Heart right ventricle (tissue), 16 donors: ENCODE measurements at regions of chr12 and their contacts with region 1.

Region 1: GRCh38 chr12:68610370-68611093 is at the start of gene RAP1B:
- DNase-seq: peak; percentile 90 to 91
- ATAC-seq: peak; percentile 96 to 99 (median 97)
- H3K4me3 ChIP-seq: peak within 1 kb of the TSS; percentile 54 to 91 (median 78)
- H3K27ac ChIP-seq: peak within 1 kb of the TSS; percentile 88 to 99 (median 96)
- H3K4me1 ChIP-seq: peaks cover 7 to 43% (median 35%) of the 10 kb centered on the region in 9 donors
- H3K27me3 ChIP-seq: no peaks in the 10 kb centered on the region
- CTCF ChIP-seq: peak in 1 of 9 donors; percentile 20
- total RNA-seq, gene RAP1B: 38.1 to 81.2 (median 42.0) TPM

Region 2: GRCh38 chr12:68331869-68332727 is 278.4 kb before region 1 on chr12 and contains the start of gene MDM1:
- intact Hi-C with region 1: loop called in 1 of 10 experiments (anchors 1 kb)
- DNase-seq: peak; percentile 96 to 99
- ATAC-seq: peak; percentile 99 to 100 (median 100)
- H3K4me3 ChIP-seq: peak within 1 kb of the TSS; percentile 69 to 88 (median 76)
- H3K27ac ChIP-seq: peak within 1 kb of the TSS in 9 of 10 donors; percentile 57 to 82 (median 69)
- H3K4me1 ChIP-seq: peaks cover 0 to 22% (median 14%) of the 10 kb centered on the region in 9 donors
- H3K27me3 ChIP-seq: no peaks in the 10 kb centered on the region
- CTCF ChIP-seq: no peak
- total RNA-seq, gene MDM1: 3.3 to 8.5 (median 6.2) TPM

Region 3: DNA sequence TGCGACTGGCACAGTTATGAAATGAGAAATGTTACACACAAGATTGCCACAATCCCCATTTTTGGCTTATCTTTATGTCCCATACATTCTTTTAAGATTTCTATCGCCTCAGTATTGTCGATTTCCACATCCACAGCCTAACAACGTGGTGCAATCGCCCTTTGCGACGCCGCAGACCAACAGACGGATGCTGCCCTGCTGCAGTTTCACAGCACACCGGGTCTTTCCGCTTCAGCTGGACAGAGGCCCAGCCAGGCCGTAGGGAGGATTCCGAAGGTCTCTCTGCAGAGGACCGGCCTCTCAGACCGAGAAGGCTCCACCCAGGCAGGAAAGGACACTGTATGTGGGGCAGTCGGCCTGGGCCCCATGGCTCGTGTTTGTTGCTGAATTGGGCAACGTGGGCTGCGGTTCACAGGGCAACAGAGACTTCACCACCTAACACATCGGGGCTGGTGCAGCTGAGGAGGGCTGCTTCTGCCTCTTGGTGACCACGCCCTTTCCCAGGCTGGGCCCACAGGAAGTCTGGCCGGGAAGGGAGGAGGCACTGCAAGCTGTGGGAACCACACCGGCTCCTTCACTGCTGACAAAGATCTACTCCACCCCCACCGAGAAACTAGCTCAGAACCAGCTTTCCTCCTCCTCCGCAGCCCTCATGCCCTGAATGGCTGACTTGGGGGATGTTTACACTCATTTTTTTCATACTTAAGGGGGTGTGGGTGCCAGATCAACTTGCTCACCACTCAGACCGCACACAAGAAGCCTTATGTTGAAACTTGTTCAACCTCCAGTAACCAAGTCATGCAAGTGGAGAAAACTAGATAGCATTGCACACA is 245.4 kb before region 1 on chr12:
- intact Hi-C with region 1: loop called in 5 of 10 experiments (anchors 2 to 10 kb)
- DNase-seq: peak; percentile 89 to 92
- ATAC-seq: peak; percentile 97 to 99 (median 98)
- H3K4me3 ChIP-seq: peak overlapping the region; percentile 4 to 56 (median 40)
- H3K27ac ChIP-seq: peak overlapping the region; percentile 65 to 93 (median 82)
- H3K4me1 ChIP-seq: peaks cover 0 to 69% (median 37%) of the 10 kb centered on the region in 9 donors
- H3K27me3 ChIP-seq: no peaks in the 10 kb centered on the region
- CTCF ChIP-seq: peak in 3 of 9 donors; percentile 23 to 37 (median 28)

Region 4: DNA sequence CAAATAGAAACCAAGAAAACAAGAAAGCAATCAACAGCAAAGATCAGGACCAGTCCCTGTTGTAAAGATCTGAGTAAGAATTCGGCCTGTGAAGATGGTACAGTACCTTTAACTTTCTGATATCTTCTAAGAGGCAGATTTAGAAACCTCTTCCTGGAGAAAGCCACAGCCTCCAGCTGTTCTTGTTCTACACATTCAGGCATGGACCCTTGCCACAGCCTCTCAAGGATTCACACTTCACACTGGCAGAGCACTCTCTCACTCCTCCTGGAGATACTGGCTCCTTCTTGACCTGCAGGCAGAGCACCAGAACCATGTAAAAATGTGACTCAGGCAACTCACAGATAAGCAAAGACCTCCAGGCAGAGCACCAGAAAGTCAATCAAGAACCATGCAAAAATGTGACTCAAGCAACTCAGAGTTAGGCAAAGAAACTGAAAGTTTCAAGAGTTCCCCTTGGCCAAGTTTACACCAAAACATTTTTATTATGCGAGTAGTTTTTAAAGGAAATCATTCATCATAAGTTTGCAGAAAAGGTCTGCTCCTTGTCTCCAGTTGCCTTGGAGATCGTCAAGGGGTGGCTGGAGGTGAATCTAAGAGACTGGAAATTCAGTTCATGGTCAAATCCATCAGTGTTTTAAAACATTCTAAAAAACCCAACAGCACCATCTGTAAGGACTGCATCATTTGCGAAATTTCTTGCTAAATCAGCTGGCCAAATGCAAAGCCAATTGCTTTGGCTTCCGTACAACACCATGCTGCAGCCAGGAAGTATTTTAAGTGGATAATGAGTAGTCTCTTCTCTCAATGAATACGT is 159.1 kb before region 1 on chr12:
- intact Hi-C with region 1: loop called in 1 of 10 experiments (anchors 10 kb)
- DNase-seq: peak in 1 of 2 donors; percentile 19
- ATAC-seq: peak in 7 of 8 donors; percentile 44 to 77 (median 47)
- H3K4me3 ChIP-seq: peak overlapping the region in 4 of 10 donors; percentile 2 to 24 (median 12)
- H3K27ac ChIP-seq: peak overlapping the region in 7 of 10 donors; percentile 3 to 64 (median 56)
- H3K4me1 ChIP-seq: peaks cover 5 to 75% (median 48%) of the 10 kb centered on the region in 9 donors
- H3K27me3 ChIP-seq: no peaks in the 10 kb centered on the region
- CTCF ChIP-seq: no peak

Region 5: DNA sequence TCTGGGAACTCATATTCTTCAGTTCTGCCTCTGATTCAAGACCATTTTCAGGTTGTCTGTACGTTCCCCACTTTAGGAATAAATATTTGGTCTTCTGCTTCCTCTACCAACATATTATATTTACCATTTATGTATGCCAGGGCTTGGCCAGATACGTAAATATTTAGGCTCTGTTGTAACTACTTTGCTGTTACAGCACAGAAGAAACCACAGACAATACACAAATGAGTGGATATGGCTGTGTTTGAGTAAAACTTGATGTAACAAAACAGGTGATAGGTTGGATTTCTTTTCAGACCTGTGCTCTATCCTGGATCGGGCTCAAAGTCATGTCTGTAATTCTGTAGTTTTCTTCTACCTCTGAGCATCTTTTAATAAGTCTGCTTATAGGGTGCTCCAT is 37.6 kb after region 1 on chr12:
- intact Hi-C with region 1: loop called in 1 of 10 experiments (anchors 5 kb)
- DNase-seq: no peak
- ATAC-seq: no peak
- H3K4me3 ChIP-seq: no peak overlapping the region
- H3K27ac ChIP-seq: no peak overlapping the region
- H3K4me1 ChIP-seq: peaks cover 0 to 41% (median 15%) of the 10 kb centered on the region in 9 donors
- H3K27me3 ChIP-seq: no peaks in the 10 kb centered on the region
- CTCF ChIP-seq: no peak

Region 6: GRCh38 chr12:68807576-68808387 is 197.2 kb after region 1 on chr12 and contains the start of gene MDM2:
- intact Hi-C with region 1: loop called in 1 of 10 experiments (anchors 5 kb)
- DNase-seq: peak; percentile 93 to 97
- ATAC-seq: peak; percentile 96 to 99 (median 96)
- H3K4me3 ChIP-seq: peak within 1 kb of the TSS; percentile 78 to 98 (median 92)
- H3K27ac ChIP-seq: peak within 1 kb of the TSS; percentile 95 to 100 (median 99)
- H3K4me1 ChIP-seq: peaks cover 3 to 47% (median 26%) of the 10 kb centered on the region in 9 donors
- H3K27me3 ChIP-seq: no peaks in the 10 kb centered on the region
- CTCF ChIP-seq: peak; percentile 79 to 97 (median 90)
- total RNA-seq, gene MDM2: 40.1 to 59.1 (median 47.1) TPM